ENCODE measurements at regions of chr2 and their contacts with region 1.

Region 1: DNA sequence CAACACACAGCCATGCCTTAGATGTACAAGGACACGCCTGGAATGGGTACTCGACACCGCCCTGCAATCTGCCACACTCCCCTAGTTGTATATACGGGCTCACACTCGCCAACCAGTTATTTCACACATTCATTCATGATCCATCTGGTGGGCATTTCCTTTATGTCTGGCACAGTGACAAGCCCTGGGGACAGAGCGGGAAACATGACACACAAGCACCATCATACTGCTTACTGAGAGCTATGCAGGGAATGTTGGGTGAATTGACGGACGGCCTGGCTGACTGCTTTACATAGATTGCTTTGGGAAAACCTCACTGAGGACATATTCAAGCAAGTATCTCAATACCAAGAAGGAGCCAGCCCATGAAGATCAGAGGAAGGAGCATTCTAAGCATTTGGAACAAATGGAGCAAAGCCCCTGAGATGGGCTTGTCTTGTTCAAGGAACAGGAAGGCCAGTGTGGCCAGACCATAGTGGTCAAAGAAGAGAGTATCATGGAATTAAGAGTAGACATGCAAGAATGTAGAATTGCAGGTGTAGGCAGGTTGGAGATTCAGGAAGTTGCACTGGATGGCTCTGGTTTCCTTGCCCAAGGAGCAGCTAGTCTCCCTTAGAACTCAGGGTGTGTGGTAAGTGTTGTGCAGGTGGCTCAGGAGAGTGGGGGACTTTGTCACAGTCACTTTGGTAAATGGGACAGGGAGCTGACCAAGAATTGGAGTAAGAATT is 448.2 kb upstream of the SPRED2 start:
- DNase-seq: no peak
- H3K4me3 ChIP-seq: no peak overlapping the region
- H3K27ac ChIP-seq: no peak overlapping the region
- H3K4me1 ChIP-seq: no peaks in the 10 kb centered on the region
- H3K27me3 ChIP-seq: no peaks in the 10 kb centered on the region
- CTCF ChIP-seq: no peak

Region 2: GRCh38 chr2:64453770-64454385 is 1426.7 kb before region 1 on chr2 and contains the start of gene LGALSL:
- CTCF ChIA-PET with region 1: interaction called, 12 read pairs
- dilution Hi-C with region 1: no loop called
- in situ Hi-C with region 1: no loop called
- intact Hi-C with region 1: no loop called
- DNase-seq: peak; percentile 71
- H3K4me3 ChIP-seq: peak within 1 kb of the TSS; percentile 67 to 78 (median 68)
- H3K27ac ChIP-seq: peak within 1 kb of the TSS; percentile 91
- H3K4me1 ChIP-seq: peaks cover 23% of the 10 kb centered on the region
- H3K27me3 ChIP-seq: no peaks in the 10 kb centered on the region
- CTCF ChIP-seq: no peak
- total RNA-seq, gene LGALSL: 11.8 to 23.3 TPM